MCF 10A (cell line): ENCODE measurements at regions of chr15 and their contacts with region 1.

Region 1: DNA sequence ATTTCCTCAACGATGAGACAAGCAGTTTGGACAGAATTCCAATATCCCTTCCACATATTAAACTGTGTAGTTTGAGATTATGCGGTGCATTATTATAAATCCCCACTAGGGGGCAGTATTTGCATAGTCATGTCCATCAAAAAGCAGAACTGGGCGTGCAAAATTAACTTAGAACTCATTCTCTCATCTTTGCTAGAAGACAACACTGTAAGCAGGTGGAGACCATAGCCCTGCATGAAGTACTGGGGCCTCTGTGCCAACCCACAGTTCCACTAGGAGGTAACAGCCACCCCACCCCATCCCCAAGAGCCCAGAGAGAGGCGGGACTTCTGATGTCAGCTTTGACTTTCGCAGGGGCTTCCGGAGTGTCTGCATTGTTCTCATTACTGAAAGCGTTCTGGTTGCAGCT is 106.6 kb upstream of the TMC3 start:
- DNase-seq: peak; percentile 62
- H3K4me3 Mint-ChIP-seq: no peak overlapping the region
- H3K27ac Mint-ChIP-seq: no peak overlapping the region
- H3K4me1 Mint-ChIP-seq: no peaks in the 10 kb centered on the region
- H3K27me3 Mint-ChIP-seq: no peaks in the 10 kb centered on the region
- CTCF ChIP-seq: peak; percentile 79

Region 2: GRCh38 chr15:81752546-81752942 is 271.9 kb after region 1 on chr15:
- CTCF ChIA-PET with region 1: no interaction called
- POLR2A ChIA-PET with region 1: no interaction called
- intact Hi-C with region 1: loop called (anchors 5 kb)
- DNase-seq: peak; percentile 78
- H3K4me3 Mint-ChIP-seq: no peak overlapping the region
- H3K27ac Mint-ChIP-seq: peak overlapping the region; percentile 33
- H3K4me1 Mint-ChIP-seq: peaks cover 25% of the 10 kb centered on the region
- H3K27me3 Mint-ChIP-seq: no peaks in the 10 kb centered on the region
- CTCF ChIP-seq: no peak

Region 3: GRCh38 chr15:81939604-81940440 is 459.2 kb after region 1 on chr15:
- CTCF ChIA-PET with region 1: interaction called, 28 read pairs
- POLR2A ChIA-PET with region 1: no interaction called
- intact Hi-C with region 1: loop called (anchors 1 kb)
- DNase-seq: peak; percentile 69
- H3K4me3 Mint-ChIP-seq: no peak overlapping the region
- H3K27ac Mint-ChIP-seq: no peak overlapping the region
- H3K4me1 Mint-ChIP-seq: peaks cover 10% of the 10 kb centered on the region
- H3K27me3 Mint-ChIP-seq: no peaks in the 10 kb centered on the region
- CTCF ChIP-seq: peak; percentile 79

Region 4: GRCh38 chr15:82103468-82103867 is 622.8 kb after region 1 on chr15:
- CTCF ChIA-PET with region 1: interaction called, 7 read pairs
- POLR2A ChIA-PET with region 1: no interaction called
- intact Hi-C with region 1: loop called (anchors 1 kb)
- DNase-seq: no peak
- H3K4me3 Mint-ChIP-seq: no peak overlapping the region
- H3K27ac Mint-ChIP-seq: no peak overlapping the region
- H3K4me1 Mint-ChIP-seq: peaks cover 7% of the 10 kb centered on the region
- H3K27me3 Mint-ChIP-seq: no peaks in the 10 kb centered on the region
- CTCF ChIP-seq: peak; percentile 35

Region 5: GRCh38 chr15:82139823-82140268 is 659.2 kb after region 1 on chr15:
- CTCF ChIA-PET with region 1: interaction called, 5 read pairs
- POLR2A ChIA-PET with region 1: no interaction called
- intact Hi-C with region 1: loop called (anchors 1 kb)
- DNase-seq: peak; percentile 66
- H3K4me3 Mint-ChIP-seq: no peak overlapping the region
- H3K27ac Mint-ChIP-seq: peak overlapping the region; percentile 1
- H3K4me1 Mint-ChIP-seq: peaks cover 8% of the 10 kb centered on the region
- H3K27me3 Mint-ChIP-seq: no peaks in the 10 kb centered on the region
- CTCF ChIP-seq: peak; percentile 59